CD14-positive monocyte (primary cell): ENCODE measurements at regions of chr6 and their contacts with region 1.

Region 1: GRCh38 chr6:43629505-43630300 is 639 bp upstream of the GTPBP2 start:
- DNase-seq: peak; percentile 95 to 97 (median 96)
- H3K4me3 ChIP-seq: peak overlapping the region; percentile 49 to 95 (median 80)
- H3K4me3 Mint-ChIP-seq: peak overlapping the region; percentile 93 to 96
- H3K27ac ChIP-seq: peak overlapping the region; percentile 87 to 95
- H3K27ac Mint-ChIP-seq: peak overlapping the region; percentile 94 to 100 (median 99)
- H3K4me1 ChIP-seq: peaks cover 51 to 60% of the 10 kb centered on the region in 2 donors
- H3K4me1 Mint-ChIP-seq: peaks cover 46% of the 10 kb centered on the region
- H3K27me3 ChIP-seq: no peaks in the 10 kb centered on the region
- H3K27me3 Mint-ChIP-seq: peaks cover 0 to 2% (median 0%) of the 10 kb centered on the region in 3 donors
- CTCF ChIP-seq: no peak

Region 2: DNA sequence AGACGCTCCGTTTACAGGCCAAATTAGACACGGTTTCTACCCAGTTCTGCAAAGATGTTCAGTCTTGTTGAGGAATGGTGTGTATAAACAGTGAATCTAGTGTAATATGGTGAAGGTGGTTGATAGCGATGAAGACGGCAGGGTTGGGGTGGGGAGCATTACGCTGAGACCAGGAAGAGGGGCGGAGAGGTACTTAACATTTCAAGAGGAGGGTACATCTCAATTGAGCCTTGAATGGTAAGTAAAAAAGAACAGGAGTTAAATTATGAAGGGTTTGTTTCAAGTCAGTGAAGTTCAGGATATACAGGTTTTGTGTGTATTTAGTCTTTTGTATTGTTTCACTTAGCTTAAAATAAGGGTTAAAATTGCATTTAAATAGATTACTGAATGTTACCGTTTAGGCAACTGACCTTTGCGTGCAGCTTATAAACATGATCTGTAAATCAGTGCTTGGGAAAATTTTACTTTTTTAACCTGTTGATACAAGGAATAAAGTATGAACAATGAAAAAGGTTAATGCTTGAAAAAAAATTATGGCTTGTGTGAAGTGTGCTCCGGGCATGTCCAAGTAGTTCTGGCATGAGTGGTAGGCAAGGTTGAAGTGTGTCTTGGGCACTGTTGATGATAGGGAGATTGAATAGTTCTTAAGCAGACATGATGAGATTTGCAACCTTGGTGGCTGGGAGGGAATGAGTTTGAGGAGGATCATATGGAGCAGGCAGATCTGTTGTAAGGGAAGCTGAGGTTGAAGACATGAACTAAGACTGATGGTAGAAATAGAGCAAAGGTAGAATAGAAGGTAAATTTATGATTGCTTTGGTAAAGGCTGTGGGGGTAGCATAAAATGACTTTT is 112.0 kb before region 1 on chr6:
- intact Hi-C with region 1: no loop called
- DNase-seq: no peak
- H3K4me3 ChIP-seq: peak overlapping the region; percentile 61 to 100 (median 78)
- H3K4me3 Mint-ChIP-seq: no peak overlapping the region
- H3K27ac ChIP-seq: peak overlapping the region in 1 of 2 donors; percentile 93
- H3K27ac Mint-ChIP-seq: no peak overlapping the region
- H3K4me1 ChIP-seq: peaks cover 23 to 31% of the 10 kb centered on the region in 2 donors
- H3K4me1 Mint-ChIP-seq: peaks cover 24% of the 10 kb centered on the region
- H3K27me3 ChIP-seq: no peaks in the 10 kb centered on the region
- H3K27me3 Mint-ChIP-seq: no peaks in the 10 kb centered on the region
- CTCF ChIP-seq: no peak

Region 3: GRCh38 chr6:43575772-43576551 is 53.7 kb before region 1 on chr6 and contains the starts of genes POLH and XPO5:
- intact Hi-C with region 1: loop called in 1 of 2 experiments (anchors 5 kb)
- DNase-seq: peak; percentile 86 to 91 (median 90)
- H3K4me3 ChIP-seq: peak within 1 kb of the TSS; percentile 82 to 99 (median 88)
- H3K4me3 Mint-ChIP-seq: peak within 1 kb of the TSS; percentile 98 to 99
- H3K27ac ChIP-seq: peak within 1 kb of the TSS; percentile 52 to 88
- H3K27ac Mint-ChIP-seq: peak within 1 kb of the TSS; percentile 82 to 95 (median 91)
- H3K4me1 ChIP-seq: peaks cover 18 to 24% of the 10 kb centered on the region in 2 donors
- H3K4me1 Mint-ChIP-seq: peaks cover 29% of the 10 kb centered on the region
- H3K27me3 ChIP-seq: no peaks in the 10 kb centered on the region
- H3K27me3 Mint-ChIP-seq: no peaks in the 10 kb centered on the region
- CTCF ChIP-seq: no peak
- polyA plus RNA-seq, gene POLH: 2.0 to 2.6 (median 2.1) TPM
- polyA plus RNA-seq, gene XPO5: 8.0 to 17.5 (median 13.8) TPM

Region 4: GRCh38 chr6:43588194-43588593 is 41.5 kb before region 1 on chr6:
- intact Hi-C with region 1: no loop called
- DNase-seq: no peak
- H3K4me3 ChIP-seq: no peak overlapping the region
- H3K4me3 Mint-ChIP-seq: no peak overlapping the region
- H3K27ac ChIP-seq: no peak overlapping the region
- H3K27ac Mint-ChIP-seq: peak overlapping the region in 1 of 7 donors; percentile 21
- H3K4me1 ChIP-seq: no peaks in the 10 kb centered on the region
- H3K4me1 Mint-ChIP-seq: no peaks in the 10 kb centered on the region
- H3K27me3 ChIP-seq: no peaks in the 10 kb centered on the region
- H3K27me3 Mint-ChIP-seq: no peaks in the 10 kb centered on the region
- CTCF ChIP-seq: no peak

Region 5: DNA sequence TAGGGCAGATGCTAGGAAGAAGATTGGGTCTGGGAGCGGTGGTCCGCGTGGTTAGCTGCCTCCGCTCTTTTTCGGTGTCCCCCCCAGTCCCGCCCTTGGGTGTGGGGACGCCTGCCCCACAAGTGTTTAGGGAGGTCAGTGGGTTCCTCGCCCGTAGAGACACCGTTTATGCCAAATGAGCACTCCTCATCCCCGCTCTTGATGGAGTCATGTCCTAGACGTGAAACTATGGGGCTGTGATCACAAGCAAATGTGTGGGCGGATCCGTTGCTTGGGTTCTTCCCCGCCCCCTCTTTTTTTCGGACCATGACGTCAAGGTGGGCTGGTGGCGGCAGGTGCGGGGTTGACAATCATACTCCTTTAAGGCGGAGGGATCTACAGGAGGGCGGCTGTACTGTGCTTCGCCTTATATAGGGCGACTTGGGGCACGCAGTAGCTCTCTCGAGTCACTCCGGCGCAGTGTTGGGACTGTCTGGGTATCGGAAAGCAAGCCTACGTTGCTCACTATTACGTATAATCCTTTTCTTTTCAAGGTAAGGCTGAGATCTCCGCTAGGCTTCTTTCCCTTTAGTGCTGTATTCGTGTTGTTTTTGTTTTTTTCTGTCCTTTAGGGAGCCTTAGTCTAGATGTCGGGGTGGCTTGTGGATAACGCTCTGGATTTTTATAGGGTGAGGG is 617.1 kb after region 1 on chr6 and contains the start of gene HSP90AB1:
- intact Hi-C with region 1: loop called in 1 of 2 experiments (anchors 5 kb)
- DNase-seq: peak; percentile 93 to 95 (median 93)
- H3K4me3 ChIP-seq: peak within 1 kb of the TSS; percentile 69 to 100 (median 99)
- H3K4me3 Mint-ChIP-seq: peak within 1 kb of the TSS; percentile 96 to 98
- H3K27ac ChIP-seq: peak within 1 kb of the TSS; percentile 90 to 93
- H3K27ac Mint-ChIP-seq: peak within 1 kb of the TSS; percentile 94 to 97 (median 96)
- H3K4me1 ChIP-seq: peaks cover 19 to 36% of the 10 kb centered on the region in 2 donors
- H3K4me1 Mint-ChIP-seq: peaks cover 29% of the 10 kb centered on the region
- H3K27me3 ChIP-seq: no peaks in the 10 kb centered on the region
- H3K27me3 Mint-ChIP-seq: peaks cover 0 to 9% (median 0%) of the 10 kb centered on the region in 3 donors
- CTCF ChIP-seq: no peak
- polyA plus RNA-seq, gene HSP90AB1: 119 to 242 (median 145) TPM